WTC11 (cell line): ENCODE measurements at regions of chr4 and their contacts with region 1.

Region 1: DNA sequence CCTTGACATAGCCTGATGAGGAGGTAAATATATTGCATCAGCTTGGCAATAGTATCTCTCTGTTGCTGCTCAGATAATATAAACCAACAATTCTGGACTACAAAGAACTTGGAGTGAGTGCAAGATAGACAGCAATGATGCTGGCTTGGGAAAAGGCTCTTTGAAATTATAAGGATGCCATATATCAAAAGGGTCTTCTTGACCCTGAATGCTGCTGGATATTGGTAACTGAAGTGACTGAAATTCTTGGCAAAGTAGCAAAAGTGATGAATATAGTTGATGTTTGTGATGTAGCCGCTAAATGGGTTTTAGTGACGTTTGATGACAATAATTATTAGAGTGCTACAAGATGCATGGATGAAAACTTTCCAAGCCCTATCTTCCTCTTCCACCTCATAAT is 1391.6 kb downstream of the ADGRL3 start:
- DNase-seq: no peak
- ATAC-seq: no peak
- H3K4me3 Mint-ChIP-seq: no peak overlapping the region
- H3K27ac Mint-ChIP-seq: no peak overlapping the region
- H3K4me1 Mint-ChIP-seq: no peaks in the 10 kb centered on the region
- H3K27me3 Mint-ChIP-seq: no peaks in the 10 kb centered on the region
- CTCF ChIP-seq: no peak

Region 2: GRCh38 chr4:62618042-62618441 is 26.3 kb after region 1 on chr4:
- CTCF ChIA-PET with region 1: no interaction called
- POLR2A ChIA-PET with region 1: no interaction called
- DNase-seq: no peak
- ATAC-seq: no peak
- H3K4me3 Mint-ChIP-seq: no peak overlapping the region
- H3K27ac Mint-ChIP-seq: no peak overlapping the region
- H3K4me1 Mint-ChIP-seq: no peaks in the 10 kb centered on the region
- H3K27me3 Mint-ChIP-seq: no peaks in the 10 kb centered on the region
- CTCF ChIP-seq: no peak

Region 3: GRCh38 chr4:62644372-62644771 is 52.6 kb after region 1 on chr4:
- CTCF ChIA-PET with region 1: interaction called, 13 read pairs
- POLR2A ChIA-PET with region 1: no interaction called
- DNase-seq: peak; percentile 18
- ATAC-seq: peak; percentile 96
- H3K4me3 Mint-ChIP-seq: no peak overlapping the region
- H3K27ac Mint-ChIP-seq: no peak overlapping the region
- H3K4me1 Mint-ChIP-seq: no peaks in the 10 kb centered on the region
- H3K27me3 Mint-ChIP-seq: no peaks in the 10 kb centered on the region
- CTCF ChIP-seq: no peak

Region 4: DNA sequence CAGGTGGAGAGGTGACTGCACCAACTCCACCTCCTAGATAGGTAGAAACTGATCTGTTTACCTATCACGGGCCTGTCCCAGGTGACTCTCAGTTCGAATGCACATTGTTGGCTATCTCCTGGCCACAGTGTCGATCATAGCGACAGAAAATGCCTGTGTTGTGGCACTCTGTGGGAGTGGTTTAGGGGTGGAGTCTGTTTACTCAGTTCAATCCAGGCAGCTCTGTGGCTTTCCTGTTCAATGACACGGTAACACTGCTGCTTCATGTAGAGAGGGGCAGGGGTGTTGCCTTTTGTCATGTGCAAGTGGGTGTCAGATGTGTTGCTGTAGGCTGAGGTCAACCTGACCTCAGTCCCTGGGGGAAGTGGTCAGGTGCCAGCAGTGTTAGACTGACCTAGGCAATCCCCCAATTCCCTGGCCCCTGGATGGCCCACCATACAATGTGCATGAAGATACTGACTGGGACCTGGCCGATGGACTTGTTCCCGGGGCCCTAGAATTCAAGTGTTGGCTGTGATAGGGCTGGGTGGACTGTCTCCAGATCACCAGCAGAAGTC is 215.1 kb after region 1 on chr4:
- CTCF ChIA-PET with region 1: no interaction called
- POLR2A ChIA-PET with region 1: no interaction called
- DNase-seq: no peak
- ATAC-seq: no peak
- H3K4me3 Mint-ChIP-seq: no peak overlapping the region
- H3K27ac Mint-ChIP-seq: no peak overlapping the region
- H3K4me1 Mint-ChIP-seq: no peaks in the 10 kb centered on the region
- H3K27me3 Mint-ChIP-seq: no peaks in the 10 kb centered on the region
- CTCF ChIP-seq: no peak